ENCODE measurements at regions of chr1 and their contacts with region 1.

Region 1: GRCh38 chr1:27203946-27204345 is 30.5 kb upstream of the WDTC1 start:
- DNase-seq: no peak
- ATAC-seq: no peak
- H3K4me3 ChIP-seq: no peak overlapping the region
- H3K27ac ChIP-seq: no peak overlapping the region
- H3K4me1 ChIP-seq: no peaks in the 10 kb centered on the region
- H3K27me3 ChIP-seq: no peaks in the 10 kb centered on the region
- CTCF ChIP-seq: no peak

Region 2: DNA sequence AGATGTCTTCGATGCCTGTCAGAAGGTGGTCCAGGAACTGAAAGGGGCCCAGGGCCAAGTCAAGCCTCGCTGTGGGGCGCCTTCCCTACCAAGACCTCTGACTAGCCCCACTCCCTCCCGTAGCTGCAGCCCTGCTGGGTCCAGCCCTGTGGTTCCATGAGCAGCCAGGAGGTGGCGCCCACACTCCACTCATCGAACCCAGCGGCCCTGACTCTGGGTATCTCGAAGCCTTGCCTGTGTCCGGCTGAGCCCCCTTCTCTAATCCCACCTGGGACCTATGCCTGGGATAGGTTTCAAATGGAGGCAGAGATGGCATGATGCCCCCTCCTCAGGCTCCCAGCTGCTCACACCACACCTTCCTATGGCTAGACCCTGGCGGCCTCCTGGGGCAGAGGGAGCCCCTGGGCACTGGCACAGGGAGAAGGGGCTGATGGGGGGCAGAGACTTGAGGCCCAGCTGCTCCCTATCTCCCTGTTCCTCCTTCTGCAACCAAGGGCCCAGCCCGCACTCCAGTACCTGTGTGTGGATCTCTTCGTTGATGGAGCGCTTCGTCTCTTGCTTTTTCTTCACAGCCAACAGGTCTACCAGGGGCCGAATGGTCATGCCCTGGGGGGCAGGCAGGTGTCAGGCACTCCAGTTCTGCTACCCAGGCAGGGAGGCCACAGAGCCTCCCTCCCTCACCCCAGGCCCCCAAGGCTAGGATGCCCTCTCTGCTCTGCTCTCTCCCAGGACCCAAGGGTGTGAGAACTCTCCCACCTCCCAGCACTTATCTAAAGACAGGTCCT is 101.0 kb before region 1 on chr1:
- CTCF ChIA-PET with region 1: no interaction called
- POLR2A ChIA-PET with region 1: no interaction called
- intact Hi-C with region 1: loop called (anchors 2 kb)
- DNase-seq: peak; percentile 80
- ATAC-seq: peak; percentile 45
- H3K4me3 ChIP-seq: no peak overlapping the region
- H3K27ac ChIP-seq: no peak overlapping the region
- H3K4me1 ChIP-seq: peaks cover 35% of the 10 kb centered on the region
- H3K27me3 ChIP-seq: no peaks in the 10 kb centered on the region
- CTCF ChIP-seq: peak; percentile 95

Region 3: GRCh38 chr1:27133991-27134390 is 70.0 kb before region 1 on chr1:
- CTCF ChIA-PET with region 1: interaction called, 18 read pairs
- POLR2A ChIA-PET with region 1: no interaction called
- intact Hi-C with region 1: no loop called
- DNase-seq: no peak
- ATAC-seq: no peak
- H3K4me3 ChIP-seq: no peak overlapping the region
- H3K27ac ChIP-seq: no peak overlapping the region
- H3K4me1 ChIP-seq: peaks cover 12% of the 10 kb centered on the region
- H3K27me3 ChIP-seq: no peaks in the 10 kb centered on the region
- CTCF ChIP-seq: no peak

Region 4: GRCh38 chr1:27154991-27155781 is 48.8 kb before region 1 on chr1 and contains the start of gene SLC9A1:
- CTCF ChIA-PET with region 1: no interaction called
- POLR2A ChIA-PET with region 1: no interaction called
- intact Hi-C with region 1: loop called (anchors 2 kb)
- DNase-seq: peak; percentile 87
- ATAC-seq: peak; percentile 86
- H3K4me3 ChIP-seq: peak within 1 kb of the TSS; percentile 81
- H3K27ac ChIP-seq: peak within 1 kb of the TSS; percentile 48
- H3K4me1 ChIP-seq: peaks cover 43% of the 10 kb centered on the region
- H3K27me3 ChIP-seq: no peaks in the 10 kb centered on the region
- CTCF ChIP-seq: peak; percentile 83
- total RNA-seq, gene SLC9A1: 25.2 and 26.4 TPM in 2 replicates

Measured in PC-3 (cell line).